IMR-90 (cell line): ENCODE measurements at regions of chr4 and their contacts with region 1.

Region 1: GRCh38 chr4:74531963-74532794 is 87.2 kb downstream of the AREG start:
- DNase-seq: peak; percentile 87
- ATAC-seq: peak; percentile 88
- H3K4me3 ChIP-seq: no peak overlapping the region
- H3K27ac ChIP-seq: no peak overlapping the region
- H3K4me1 ChIP-seq: peaks cover 4% of the 10 kb centered on the region; the same call in 1 of the 2 replicates
- H3K27me3 ChIP-seq: no peaks in the 10 kb centered on the region
- CTCF ChIP-seq: peak; percentile 78
- POLR2A ChIP-seq: no peak
- RAD21 ChIP-seq: peak; percentile 78

Region 2: GRCh38 chr4:74006009-74006476 is 526.1 kb before region 1 on chr4:
- CTCF ChIA-PET with region 1: no interaction called
- POLR2A ChIA-PET with region 1: no interaction called
- dilution Hi-C with region 1: no loop called
- in situ Hi-C with region 1: no loop called
- intact Hi-C with region 1: no loop called
- DNase-seq: peak; percentile 38
- ATAC-seq: no peak
- H3K4me3 ChIP-seq: no peak overlapping the region
- H3K27ac ChIP-seq: no peak overlapping the region
- H3K4me1 ChIP-seq: no peaks in the 10 kb centered on the region
- H3K27me3 ChIP-seq: no peaks in the 10 kb centered on the region
- CTCF ChIP-seq: no peak
- POLR2A ChIP-seq: no peak
- RAD21 ChIP-seq: no peak

Region 3: GRCh38 chr4:74543231-74543670 is 11.1 kb after region 1 on chr4:
- CTCF ChIA-PET with region 1: interaction called, 11 read pairs
- POLR2A ChIA-PET with region 1: no interaction called
- dilution Hi-C with region 1: no loop called
- in situ Hi-C with region 1: no loop called
- intact Hi-C with region 1: no loop called
- DNase-seq: no peak
- ATAC-seq: no peak
- H3K4me3 ChIP-seq: no peak overlapping the region
- H3K27ac ChIP-seq: no peak overlapping the region
- H3K4me1 ChIP-seq: peaks cover 14% of the 10 kb centered on the region
- H3K27me3 ChIP-seq: no peaks in the 10 kb centered on the region
- CTCF ChIP-seq: no peak
- POLR2A ChIP-seq: no peak
- RAD21 ChIP-seq: no peak